ENCODE measurements at regions of chr16 and their contacts with region 1.

Region 1: DNA sequence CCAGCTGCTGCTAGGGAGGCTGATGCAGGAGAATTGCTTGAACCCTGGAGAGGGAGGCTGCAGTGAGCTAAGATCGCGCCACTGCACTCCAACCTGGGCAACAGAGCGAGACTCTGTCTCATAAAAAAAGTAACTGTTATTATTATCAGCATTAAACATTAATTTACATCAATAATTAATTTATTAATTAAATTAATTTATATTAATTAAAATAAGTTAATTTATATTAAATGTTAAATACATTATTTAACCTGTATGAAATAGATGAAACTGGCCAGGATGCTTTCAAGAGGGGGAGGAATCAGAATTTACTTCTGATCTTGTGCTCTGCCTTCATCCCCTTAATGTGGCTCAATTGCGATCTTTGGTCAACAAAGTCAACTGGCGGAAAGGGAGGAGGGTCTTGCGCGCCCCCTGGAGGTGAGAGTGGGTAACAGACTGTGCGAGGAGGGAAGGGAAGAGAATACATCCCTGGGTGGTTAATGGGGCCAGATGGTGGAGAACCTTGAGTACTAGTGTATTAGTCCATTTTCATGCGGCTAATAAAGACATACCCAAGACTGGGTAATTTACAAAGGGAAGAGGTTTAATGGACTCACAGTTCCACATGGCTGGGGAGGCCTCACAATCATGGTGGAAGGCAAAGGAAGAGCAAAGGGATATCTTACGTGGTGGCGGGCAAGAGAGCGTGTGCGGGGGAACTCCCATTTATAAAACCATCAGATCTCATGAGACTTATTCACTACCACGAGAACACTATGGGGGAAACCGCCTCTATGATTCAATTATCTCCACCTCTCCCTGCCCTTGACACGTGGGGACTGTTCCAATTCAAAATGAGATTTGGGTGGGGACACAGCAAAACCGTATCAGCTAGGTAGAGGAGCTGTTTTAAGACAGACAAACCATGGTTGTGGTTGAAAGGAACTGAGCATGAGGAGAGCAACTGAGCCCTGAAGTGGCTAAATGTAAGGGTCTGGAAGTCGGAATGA is 15.7 kb upstream of the CPPED1 start:
- DNase-seq: peak; percentile 24
- ATAC-seq: peak; percentile 85
- H3K4me3 ChIP-seq: no peak overlapping the region
- H3K27ac ChIP-seq: no peak overlapping the region
- H3K4me1 ChIP-seq: no peaks in the 10 kb centered on the region
- H3K27me3 ChIP-seq: no peaks in the 10 kb centered on the region
- CTCF ChIP-seq: peak; percentile 58 to 85 (median 76)
- EP300 ChIP-seq: no peak
- POLR2A ChIP-seq: no peak
- RAD21 ChIP-seq: peak; percentile 95

Region 2: DNA sequence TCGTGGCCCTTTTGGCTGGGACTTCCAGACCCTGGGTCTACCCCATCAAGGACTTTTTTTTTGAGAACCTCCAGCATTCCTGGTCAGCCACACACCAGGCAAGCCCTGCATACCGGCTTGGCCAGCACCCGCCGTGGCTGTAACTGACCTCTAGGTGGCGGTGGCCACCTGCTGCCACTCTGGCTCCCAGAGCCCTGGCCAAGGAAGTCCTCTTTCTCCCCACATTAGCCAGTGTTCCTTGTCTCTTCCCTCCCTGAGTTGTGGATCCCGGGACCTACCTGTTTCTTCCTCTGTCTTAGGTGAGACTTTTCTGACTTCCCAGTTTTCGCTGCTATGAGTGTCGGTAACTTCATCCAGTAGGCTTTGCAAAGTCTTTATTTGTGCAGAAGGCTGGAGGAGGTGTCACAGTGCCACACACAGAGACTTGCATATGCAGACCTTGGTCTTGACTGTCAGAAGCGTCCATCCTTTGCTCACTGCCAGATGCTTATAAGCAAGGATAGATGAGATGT is 364.1 kb before region 1 on chr16:
- CTCF ChIA-PET with region 1: no interaction called
- POLR2A ChIA-PET with region 1: no interaction called
- RAD21 ChIA-PET with region 1: no interaction called
- SMC1A ChIA-PET with region 1: interaction called, 3 read pairs
- in situ Hi-C with region 1: no loop called
- intact Hi-C with region 1: loop called (anchors 5 kb)
- DNase-seq: no peak
- ATAC-seq: peak; percentile 90
- H3K4me3 ChIP-seq: no peak overlapping the region
- H3K27ac ChIP-seq: no peak overlapping the region
- H3K4me1 ChIP-seq: peaks cover 14% of the 10 kb centered on the region
- H3K27me3 ChIP-seq: no peaks in the 10 kb centered on the region
- CTCF ChIP-seq: peak; percentile 72 to 88 (median 83)
- EP300 ChIP-seq: no peak
- POLR2A ChIP-seq: no peak
- RAD21 ChIP-seq: peak; percentile 75

Region 3: GRCh38 chr16:12874186-12874585 is 54.8 kb after region 1 on chr16:
- CTCF ChIA-PET with region 1: no interaction called
- POLR2A ChIA-PET with region 1: no interaction called
- RAD21 ChIA-PET with region 1: no interaction called
- SMC1A ChIA-PET with region 1: no interaction called
- in situ Hi-C with region 1: no loop called
- intact Hi-C with region 1: no loop called
- DNase-seq: no peak
- ATAC-seq: no peak
- H3K4me3 ChIP-seq: no peak overlapping the region
- H3K27ac ChIP-seq: no peak overlapping the region
- H3K4me1 ChIP-seq: no peaks in the 10 kb centered on the region
- H3K27me3 ChIP-seq: no peaks in the 10 kb centered on the region
- CTCF ChIP-seq: no peak
- EP300 ChIP-seq: no peak
- POLR2A ChIP-seq: no peak
- RAD21 ChIP-seq: no peak

Region 4: GRCh38 chr16:12927591-12927990 is 108.2 kb after region 1 on chr16:
- CTCF ChIA-PET with region 1: no interaction called
- POLR2A ChIA-PET with region 1: no interaction called
- RAD21 ChIA-PET with region 1: no interaction called
- SMC1A ChIA-PET with region 1: no interaction called
- in situ Hi-C with region 1: no loop called
- intact Hi-C with region 1: no loop called
- DNase-seq: no peak
- ATAC-seq: no peak
- H3K4me3 ChIP-seq: no peak overlapping the region
- H3K27ac ChIP-seq: no peak overlapping the region
- H3K4me1 ChIP-seq: no peaks in the 10 kb centered on the region
- H3K27me3 ChIP-seq: no peaks in the 10 kb centered on the region
- CTCF ChIP-seq: no peak
- EP300 ChIP-seq: no peak
- POLR2A ChIP-seq: no peak
- RAD21 ChIP-seq: no peak

Region 5: GRCh38 chr16:13463619-13464018 is 644.2 kb after region 1 on chr16:
- CTCF ChIA-PET with region 1: no interaction called
- POLR2A ChIA-PET with region 1: no interaction called
- RAD21 ChIA-PET with region 1: no interaction called
- SMC1A ChIA-PET with region 1: no interaction called
- in situ Hi-C with region 1: no loop called
- intact Hi-C with region 1: no loop called
- DNase-seq: no peak
- ATAC-seq: no peak
- H3K4me3 ChIP-seq: no peak overlapping the region
- H3K27ac ChIP-seq: no peak overlapping the region
- H3K4me1 ChIP-seq: no peaks in the 10 kb centered on the region
- H3K27me3 ChIP-seq: no peaks in the 10 kb centered on the region; a peak in 1 of 4 replicates
- CTCF ChIP-seq: no peak
- EP300 ChIP-seq: no peak
- POLR2A ChIP-seq: no peak
- RAD21 ChIP-seq: no peak

Measured in GM12878 (cell line).